ENCODE measurements at regions of chr11 and their contacts with region 1.

Region 1: DNA sequence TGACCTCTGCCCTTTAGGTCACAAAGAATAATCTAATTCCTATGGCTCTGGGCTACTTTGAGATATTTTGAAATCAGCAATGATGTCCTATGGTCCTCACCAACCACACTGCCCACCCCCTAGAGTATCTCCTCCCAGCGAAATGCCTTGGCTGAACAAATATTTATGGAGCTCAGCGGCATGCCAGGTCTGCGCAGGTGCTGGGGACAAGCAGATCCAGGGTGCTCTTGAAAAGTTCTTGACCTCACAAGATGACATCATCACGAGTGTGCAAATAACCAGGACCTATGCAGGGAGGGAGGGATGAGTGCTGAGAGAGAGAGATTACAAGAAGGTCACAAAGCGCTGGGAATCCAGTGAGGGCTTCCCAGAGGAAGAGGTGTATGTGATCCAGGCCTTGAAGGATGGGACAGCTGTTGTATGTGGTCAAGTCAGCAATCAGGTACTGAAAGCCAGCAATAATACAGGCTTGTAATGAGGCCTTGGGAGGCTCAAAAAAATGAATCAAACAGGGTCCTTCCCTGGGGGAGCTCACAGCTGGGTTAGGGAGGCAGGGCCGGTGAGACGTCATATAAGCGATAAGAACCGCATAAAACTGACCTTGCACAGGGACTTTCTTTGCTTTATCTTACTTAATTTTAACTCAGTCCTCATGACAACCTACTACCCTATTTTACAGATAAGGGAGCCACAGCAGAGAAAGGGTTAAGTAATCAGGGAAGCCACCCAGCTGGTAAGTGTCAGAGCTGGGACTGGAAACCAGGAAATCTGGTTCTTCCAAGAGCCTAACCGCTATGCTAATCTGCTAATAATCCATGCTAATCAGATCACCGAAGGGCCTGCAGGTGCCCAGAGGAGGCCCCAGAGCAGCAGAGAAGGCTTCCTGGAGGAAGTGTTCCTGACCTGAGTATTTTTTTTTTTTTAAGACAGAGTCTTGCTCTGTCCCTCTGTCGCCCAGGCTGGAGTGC is 8.3 kb downstream of the ARRB1 start:
- DNase-seq: peak; percentile 32
- ATAC-seq: peak; percentile 66
- H3K4me3 Mint-ChIP-seq: peak overlapping the region; percentile 14; the same call in 1 of the 2 replicates
- H3K27ac Mint-ChIP-seq: peak overlapping the region; percentile 92
- H3K4me1 Mint-ChIP-seq: peaks cover 100% of the 10 kb centered on the region
- H3K27me3 Mint-ChIP-seq: no peaks in the 10 kb centered on the region
- CTCF ChIP-seq: no peak

Region 2: GRCh38 chr11:75328426-75329277 is 14.5 kb before region 1 on chr11:
- CTCF ChIA-PET with region 1: interaction called, 12 read pairs
- POLR2A ChIA-PET with region 1: no interaction called
- DNase-seq: peak; percentile 71
- ATAC-seq: peak; percentile 72
- H3K4me3 Mint-ChIP-seq: no peak overlapping the region; the same call in 1 of the 2 replicates
- H3K27ac Mint-ChIP-seq: peak overlapping the region; percentile 99
- H3K4me1 Mint-ChIP-seq: peaks cover 86% of the 10 kb centered on the region
- H3K27me3 Mint-ChIP-seq: no peaks in the 10 kb centered on the region
- CTCF ChIP-seq: no peak

Region 3: GRCh38 chr11:75468534-75469340 is 125.5 kb after region 1 on chr11:
- CTCF ChIA-PET with region 1: no interaction called
- POLR2A ChIA-PET with region 1: no interaction called
- DNase-seq: no peak
- ATAC-seq: no peak
- H3K4me3 Mint-ChIP-seq: no peak overlapping the region
- H3K27ac Mint-ChIP-seq: no peak overlapping the region
- H3K4me1 Mint-ChIP-seq: peaks cover 28% of the 10 kb centered on the region
- H3K27me3 Mint-ChIP-seq: no peaks in the 10 kb centered on the region
- CTCF ChIP-seq: no peak

Region 4: GRCh38 chr11:75577207-75577606 is 234.0 kb after region 1 on chr11:
- CTCF ChIA-PET with region 1: no interaction called
- POLR2A ChIA-PET with region 1: no interaction called
- DNase-seq: peak; percentile 78
- ATAC-seq: peak; percentile 5; the same call in 1 of the 2 replicates
- H3K4me3 Mint-ChIP-seq: no peak overlapping the region
- H3K27ac Mint-ChIP-seq: no peak overlapping the region
- H3K4me1 Mint-ChIP-seq: peaks cover 18% of the 10 kb centered on the region
- H3K27me3 Mint-ChIP-seq: peaks cover 13% of the 10 kb centered on the region
- CTCF ChIP-seq: peak; percentile 56; the same call in 1 of the 2 replicates